ENCODE measurements at regions of chr22 and their contacts with region 1.

Region 1: DNA sequence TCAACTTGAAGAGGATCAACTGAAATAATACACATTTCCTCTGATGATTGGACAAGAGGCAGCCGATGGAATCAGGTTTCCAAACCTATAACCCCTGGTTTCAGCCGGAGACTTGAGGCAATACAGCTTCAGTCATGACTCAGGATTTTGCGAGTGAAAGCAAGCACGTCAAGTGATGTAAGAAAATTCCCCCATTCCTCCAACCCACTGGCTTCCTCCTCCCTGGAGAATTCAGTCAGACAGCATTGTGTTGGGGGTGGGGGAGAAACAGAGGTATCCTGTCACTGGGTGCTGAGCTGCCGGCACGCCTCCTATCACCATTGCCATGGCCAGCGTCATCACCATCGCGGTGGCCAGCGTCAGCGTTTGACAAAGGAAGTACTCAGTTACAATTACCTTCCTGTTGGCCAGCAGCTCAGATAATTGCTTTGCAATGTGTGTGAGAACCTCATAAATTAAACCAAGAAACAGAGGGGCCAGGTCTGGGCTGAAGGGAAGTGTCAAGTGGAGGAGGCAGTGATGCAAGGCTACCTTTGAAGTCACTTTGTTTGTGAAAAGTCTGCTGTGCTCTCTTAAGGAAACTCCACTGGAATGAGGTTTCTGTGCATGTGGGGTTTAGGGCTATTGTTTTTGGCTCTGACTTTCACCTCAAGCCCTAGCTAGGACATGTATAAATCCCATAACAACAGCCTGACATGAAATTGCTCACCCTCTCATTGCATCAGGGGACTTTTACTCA is 50.2 kb downstream of the LIF start:
- DNase-seq: peak; percentile 100
- H3K4me3 ChIP-seq: peak overlapping the region; percentile 28; the same call in 1 of the 2 replicates
- H3K27ac ChIP-seq: peak overlapping the region; percentile 100
- H3K27me3 ChIP-seq: no peaks in the 10 kb centered on the region
- CTCF ChIP-seq: no peak

Region 2: GRCh38 chr22:30182350-30182745 is 14.0 kb before region 1 on chr22:
- CTCF ChIA-PET with region 1: interaction called, 10 read pairs
- POLR2A ChIA-PET with region 1: interaction called, 13 read pairs
- DNase-seq: no peak
- H3K4me3 ChIP-seq: no peak overlapping the region
- H3K27ac ChIP-seq: no peak overlapping the region
- H3K27me3 ChIP-seq: no peaks in the 10 kb centered on the region
- CTCF ChIP-seq: no peak

Region 3: DNA sequence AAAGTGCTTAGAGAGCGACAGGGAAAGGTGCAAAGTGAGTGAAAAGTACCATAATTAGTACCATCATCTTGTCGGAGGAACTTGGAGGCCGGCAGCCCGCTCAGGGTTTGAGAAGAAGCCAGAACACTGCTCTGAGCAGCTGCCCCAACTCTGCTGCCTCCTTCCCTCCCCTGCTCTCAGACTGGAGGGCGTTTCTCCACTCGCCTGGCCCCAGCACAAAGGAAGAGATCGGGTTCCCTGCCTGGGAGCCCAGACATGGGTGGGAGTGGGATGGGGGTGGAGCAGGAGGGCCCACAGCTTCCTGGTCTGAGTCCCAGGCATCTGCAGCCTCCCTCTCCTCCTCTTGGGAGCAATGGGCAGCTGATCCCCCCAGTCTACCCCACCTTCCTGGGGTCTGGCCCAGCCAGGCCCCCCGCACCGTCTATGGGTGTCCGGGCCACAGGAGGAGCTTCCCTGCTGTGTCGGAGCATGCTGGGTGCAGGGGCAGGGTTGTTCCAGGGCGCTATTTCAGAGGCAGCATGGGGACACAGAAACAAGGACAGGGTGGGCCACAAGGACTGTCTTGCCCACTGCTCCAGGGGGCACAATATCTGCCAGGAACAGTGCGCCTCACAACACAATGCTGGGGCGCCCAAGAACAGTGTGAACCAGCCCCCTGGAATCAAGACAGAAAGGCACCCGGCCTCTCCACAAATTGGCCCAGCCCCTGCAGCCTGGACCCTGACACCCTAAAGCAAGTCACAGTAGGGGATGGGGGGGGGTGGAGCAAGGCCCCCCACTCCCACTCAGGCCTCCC is 45.5 kb after region 1 on chr22:
- CTCF ChIA-PET with region 1: no interaction called
- POLR2A ChIA-PET with region 1: interaction called, 11 read pairs
- DNase-seq: no peak
- H3K4me3 ChIP-seq: peak overlapping the region; percentile 84
- H3K27ac ChIP-seq: peak overlapping the region; percentile 84
- H3K27me3 ChIP-seq: no peaks in the 10 kb centered on the region
- CTCF ChIP-seq: no peak

Measured in AG04450 (cell line).